ENCODE measurements at regions of chr18 and their contacts with region 1.

Region 1: DNA sequence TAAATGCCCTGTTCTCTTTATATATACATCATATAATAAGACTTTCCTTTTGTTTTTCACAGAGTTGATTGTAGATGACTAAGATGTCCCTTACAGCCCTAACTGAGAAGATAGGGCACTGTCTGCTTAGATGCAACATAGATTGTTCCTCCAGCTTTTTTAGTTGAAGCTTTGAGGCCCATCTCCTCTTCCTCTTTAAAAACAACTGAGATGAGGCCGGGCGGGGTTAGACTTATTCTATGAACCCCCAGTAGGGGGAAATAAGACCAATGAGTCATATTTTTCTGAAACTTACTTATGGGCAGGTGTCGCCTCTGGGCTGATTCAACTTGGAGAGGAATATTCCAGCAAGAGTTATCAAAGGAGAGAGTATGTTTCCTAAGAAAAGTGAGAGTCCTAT is 84.6 kb downstream of the FBXO15 start:
- DNase-seq: no peak
- ATAC-seq: peak; percentile 76
- H3K4me3 Mint-ChIP-seq: peak overlapping the region; percentile 12
- H3K27ac Mint-ChIP-seq: peak overlapping the region; percentile 85
- H3K4me1 Mint-ChIP-seq: peaks cover 57% of the 10 kb centered on the region
- H3K27me3 Mint-ChIP-seq: peaks cover 9% of the 10 kb centered on the region
- CTCF ChIP-seq: no peak

Region 2: DNA sequence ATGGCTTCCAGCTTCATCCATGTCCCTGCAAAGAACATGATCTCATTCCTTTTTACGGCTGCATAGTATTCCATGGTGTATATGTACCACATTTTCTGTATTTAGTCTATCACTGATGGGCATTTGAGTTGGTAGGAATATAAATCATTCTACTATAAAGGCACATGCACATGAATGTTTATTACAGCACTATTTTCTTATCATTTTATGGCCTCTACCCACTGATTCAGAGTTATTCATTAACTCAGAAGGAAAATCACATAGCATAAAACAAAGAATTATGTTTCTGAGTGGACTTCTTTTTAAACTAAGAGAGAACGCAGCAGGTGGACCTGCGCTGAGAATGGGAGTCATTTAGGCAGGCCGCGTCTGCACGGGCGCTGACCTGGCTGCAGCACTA is 535.0 kb before region 1 on chr18:
- CTCF ChIA-PET with region 1: no interaction called
- POLR2A ChIA-PET with region 1: no interaction called
- intact Hi-C with region 1: no loop called
- DNase-seq: no peak
- ATAC-seq: no peak
- H3K4me3 Mint-ChIP-seq: no peak overlapping the region
- H3K27ac Mint-ChIP-seq: no peak overlapping the region
- H3K4me1 Mint-ChIP-seq: no peaks in the 10 kb centered on the region
- H3K27me3 Mint-ChIP-seq: no peaks in the 10 kb centered on the region
- CTCF ChIP-seq: no peak

Region 3: GRCh38 chr18:74040459-74041332 is 22.3 kb before region 1 on chr18:
- CTCF ChIA-PET with region 1: interaction called, 7 read pairs
- POLR2A ChIA-PET with region 1: no interaction called
- intact Hi-C with region 1: loop called (anchors 1 kb)
- DNase-seq: peak; percentile 49
- ATAC-seq: peak; percentile 69
- H3K4me3 Mint-ChIP-seq: no peak overlapping the region
- H3K27ac Mint-ChIP-seq: no peak overlapping the region
- H3K4me1 Mint-ChIP-seq: peaks cover 16% of the 10 kb centered on the region
- H3K27me3 Mint-ChIP-seq: no peaks in the 10 kb centered on the region
- CTCF ChIP-seq: no peak

Region 4: GRCh38 chr18:74116633-74117554 is 53.9 kb after region 1 on chr18:
- CTCF ChIA-PET with region 1: no interaction called
- POLR2A ChIA-PET with region 1: no interaction called
- intact Hi-C with region 1: loop called (anchors 1 kb)
- DNase-seq: no peak
- ATAC-seq: no peak
- H3K4me3 Mint-ChIP-seq: no peak overlapping the region
- H3K27ac Mint-ChIP-seq: no peak overlapping the region
- H3K4me1 Mint-ChIP-seq: peaks cover 9% of the 10 kb centered on the region
- H3K27me3 Mint-ChIP-seq: peaks cover 5% of the 10 kb centered on the region
- CTCF ChIP-seq: no peak

Measured in activated B cell treated with CpG ODN at 0.5 μM for 24 hours (primary cell).